Activated CD4-positive, alpha-beta T cell treated with anti-CD3 and anti-CD28 coated beads, Interleukin-2, amount 10 ng/mL, durations not matched to agents 24 days and 14 days (primary cell): ENCODE measurements at regions of chr12 and their contacts with region 1.

Region 1: GRCh38 chr12:22164139-22164538 is 118.1 kb downstream of the CMAS start:
- DNase-seq: no peak
- H3K4me3 Mint-ChIP-seq: peak overlapping the region; percentile 32
- H3K27ac Mint-ChIP-seq: peak overlapping the region; percentile 1
- H3K4me1 Mint-ChIP-seq: peaks cover 17% of the 10 kb centered on the region
- H3K27me3 Mint-ChIP-seq: peaks cover 2% of the 10 kb centered on the region

Region 2: GRCh38 chr12:22046090-22046967 is 117.8 kb before region 1 on chr12 and contains the start of gene CMAS:
- intact Hi-C with region 1: loop called (anchors 10 kb)
- DNase-seq: peak; percentile 92
- H3K4me3 Mint-ChIP-seq: peak within 1 kb of the TSS; percentile 98
- H3K27ac Mint-ChIP-seq: peak within 1 kb of the TSS; percentile 89
- H3K4me1 Mint-ChIP-seq: peaks cover 34% of the 10 kb centered on the region
- H3K27me3 Mint-ChIP-seq: no peaks in the 10 kb centered on the region
- total RNA-seq, gene CMAS: 32.9 and 36.7 TPM in 2 replicates

Region 3: DNA sequence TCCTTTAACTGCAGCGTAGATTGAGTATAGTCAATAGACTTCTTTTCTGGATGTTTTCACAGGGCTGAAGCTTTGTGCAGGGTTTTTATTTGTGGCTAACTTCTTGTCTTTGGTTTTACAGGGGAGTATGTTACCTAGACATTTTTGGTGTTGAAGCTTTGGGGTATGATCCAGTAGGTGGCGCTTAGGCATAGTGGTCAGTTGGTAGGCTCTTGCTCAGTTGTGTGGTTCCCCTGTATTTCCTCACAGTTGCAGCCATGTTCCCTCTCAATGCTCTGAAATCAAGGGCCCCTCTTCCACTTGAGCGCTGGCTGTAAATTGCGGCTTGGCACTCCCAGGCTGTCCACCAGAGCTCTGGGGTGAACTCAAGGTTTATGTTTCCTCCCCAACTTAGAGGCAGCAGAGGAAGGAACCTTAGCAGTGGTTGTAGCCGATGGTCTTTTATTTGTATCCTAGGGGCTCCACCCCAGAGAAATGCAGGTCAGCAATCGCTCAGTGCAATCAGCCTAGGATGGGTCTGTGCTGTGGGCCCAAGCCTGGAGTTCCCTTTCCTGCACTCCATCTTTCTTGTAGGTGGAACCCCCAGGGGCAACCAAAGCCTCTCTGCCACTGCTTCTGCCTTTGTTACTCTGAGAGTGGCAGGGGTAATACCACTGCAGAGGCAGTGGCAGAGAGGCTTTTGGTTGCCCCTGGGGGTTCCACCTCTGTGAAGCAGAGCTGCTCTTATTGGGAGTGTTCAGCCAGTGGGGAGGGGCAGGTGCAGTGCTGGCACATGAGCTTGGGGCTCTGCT is 63.0 kb before region 1 on chr12:
- intact Hi-C with region 1: loop called (anchors 10 kb)
- DNase-seq: peak; percentile 80
- H3K4me3 Mint-ChIP-seq: no peak overlapping the region
- H3K27ac Mint-ChIP-seq: no peak overlapping the region
- H3K4me1 Mint-ChIP-seq: peaks cover 4% of the 10 kb centered on the region
- H3K27me3 Mint-ChIP-seq: peaks cover 20% of the 10 kb centered on the region

Region 4: DNA sequence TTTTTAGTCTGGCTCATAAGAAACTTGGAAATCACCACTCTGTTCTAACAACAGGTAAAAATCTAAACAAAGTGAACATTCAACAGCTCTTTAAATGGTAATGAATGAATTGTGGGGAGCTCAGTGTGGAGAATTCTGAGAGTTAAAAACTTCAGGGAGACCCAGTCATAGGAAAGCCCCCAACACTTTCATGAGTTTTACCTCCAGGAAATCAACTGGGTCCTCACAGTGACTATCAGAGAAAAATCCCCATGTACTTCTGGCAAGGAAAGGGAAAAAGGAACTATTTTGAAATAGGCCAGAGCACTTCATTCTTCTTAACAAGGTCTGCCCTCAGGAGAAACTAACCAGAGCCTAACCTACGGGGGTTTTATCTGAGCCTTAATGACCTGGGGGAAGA is 16.6 kb after region 1 on chr12:
- intact Hi-C with region 1: no loop called
- DNase-seq: no peak
- H3K4me3 Mint-ChIP-seq: no peak overlapping the region
- H3K27ac Mint-ChIP-seq: no peak overlapping the region
- H3K4me1 Mint-ChIP-seq: no peaks in the 10 kb centered on the region
- H3K27me3 Mint-ChIP-seq: no peaks in the 10 kb centered on the region